ENCODE measurements at regions of chr7 and their contacts with region 1.

Region 1: DNA sequence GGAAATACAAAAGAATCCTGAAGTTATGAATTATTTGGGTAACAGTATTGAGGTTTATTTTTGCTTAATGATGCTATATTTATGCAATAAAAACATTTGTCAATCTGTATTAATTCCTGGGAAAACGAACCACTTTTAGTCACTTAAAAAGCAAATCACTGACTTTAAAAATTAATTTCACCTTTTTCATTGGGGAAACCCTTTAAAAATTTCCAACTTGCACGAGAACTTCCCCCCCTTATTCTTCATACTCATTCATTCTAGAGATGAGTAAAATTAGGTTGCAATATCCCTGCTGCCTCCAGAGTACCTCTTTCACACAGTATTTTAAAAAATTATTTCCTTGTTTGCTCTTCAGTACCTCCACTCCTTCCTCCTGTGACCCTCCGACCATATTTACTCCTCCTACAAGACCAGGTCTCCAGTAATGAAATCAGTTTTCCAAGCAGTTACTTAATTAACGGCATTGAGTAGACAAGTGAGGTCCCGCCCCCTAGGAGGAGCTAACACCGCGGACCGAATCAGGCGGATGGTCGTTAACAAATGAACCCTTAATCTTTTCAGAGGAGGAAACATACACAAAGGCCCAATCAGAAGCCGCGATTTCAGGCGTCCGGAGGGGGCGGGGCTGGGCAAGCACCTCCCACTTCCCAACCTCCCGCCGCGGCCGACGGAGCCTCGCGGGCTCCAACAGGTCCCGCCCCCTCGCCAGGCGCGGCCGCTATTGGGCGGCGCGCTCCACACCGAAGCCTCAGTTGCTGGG is 465 bp upstream of the TRIM24 start:
- DNase-seq: no peak
- ATAC-seq: peak; percentile 96 to 98 (median 98)
- H3K4me3 ChIP-seq: peak overlapping the region; percentile 90
- H3K27ac ChIP-seq: peak overlapping the region; percentile 25
- H3K4me1 ChIP-seq: peaks cover 2% of the 10 kb centered on the region
- H3K27me3 ChIP-seq: peaks cover 0 to 2% (median 0%) of the 10 kb centered on the region in 3 donors
- CTCF ChIP-seq: peak; percentile 33

Region 2: GRCh38 chr7:138565451-138566114 is 106.0 kb after region 1 on chr7:
- intact Hi-C with region 1: loop called in 1 of 2 experiments (anchors 10 kb)
- DNase-seq: no peak
- ATAC-seq: no peak
- H3K4me3 ChIP-seq: no peak overlapping the region
- H3K27ac ChIP-seq: no peak overlapping the region
- H3K4me1 ChIP-seq: no peaks in the 10 kb centered on the region
- H3K27me3 ChIP-seq: no peaks in the 10 kb centered on the region
- CTCF ChIP-seq: no peak

Measured in psoas muscle (tissue), 8 donors.